ENCODE measurements at regions of chr1 and their contacts with region 1.

Region 1: DNA sequence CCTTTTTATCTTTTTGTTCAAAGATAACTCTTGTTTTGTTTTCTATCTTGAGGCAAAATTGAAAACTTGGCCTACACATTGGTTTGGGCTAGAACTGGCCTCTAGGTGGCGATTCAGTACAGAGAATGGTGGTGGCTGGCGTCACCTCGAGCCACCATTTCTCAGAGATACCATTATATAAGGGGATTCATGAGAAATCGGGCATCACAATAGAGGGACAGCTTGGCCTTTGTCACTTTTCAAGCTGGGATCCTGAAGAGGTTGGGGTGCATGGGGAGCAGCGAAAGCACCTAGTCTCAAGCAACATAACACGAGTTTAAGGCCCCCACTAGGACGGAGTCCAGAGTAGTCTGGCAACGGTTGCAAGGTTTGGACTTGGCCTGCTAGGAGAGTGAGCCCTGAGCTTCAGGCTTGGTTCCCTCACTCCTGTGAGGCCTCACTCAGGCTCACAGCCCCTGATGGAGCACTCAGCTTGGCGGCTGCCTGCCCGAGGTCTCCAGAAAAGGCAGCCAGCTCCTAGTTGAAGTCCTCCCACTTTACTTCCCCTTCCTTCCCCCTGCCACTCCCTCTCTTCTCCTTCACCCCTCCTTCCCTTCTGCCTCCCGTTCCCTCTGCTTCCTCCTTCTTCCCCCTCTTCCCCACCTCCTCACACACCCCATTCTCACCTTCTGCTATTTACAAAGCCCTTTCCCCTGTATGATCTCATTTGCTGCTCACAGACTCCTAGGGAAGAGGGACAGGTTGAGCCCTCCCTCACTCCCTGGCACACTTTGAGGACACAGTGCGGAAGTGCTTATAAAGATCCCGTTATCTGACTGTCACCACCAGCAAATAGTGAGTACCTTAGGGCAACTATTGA is 67.8 kb downstream of the LRIG2 start:
- DNase-seq: peak; percentile 53 to 60
- ATAC-seq: peak; percentile 91 to 95
- H3K4me3 ChIP-seq: no peak overlapping the region
- H3K27ac ChIP-seq: peak overlapping the region; percentile 63 to 82
- H3K4me1 ChIP-seq: peaks cover 19% of the 10 kb centered on the region
- CTCF ChIP-seq: peak; percentile 77
- EP300 ChIP-seq: no peak
- POLR2A ChIP-seq: no peak
- RAD21 ChIP-seq: peak; percentile 90 to 95

Region 2: DNA sequence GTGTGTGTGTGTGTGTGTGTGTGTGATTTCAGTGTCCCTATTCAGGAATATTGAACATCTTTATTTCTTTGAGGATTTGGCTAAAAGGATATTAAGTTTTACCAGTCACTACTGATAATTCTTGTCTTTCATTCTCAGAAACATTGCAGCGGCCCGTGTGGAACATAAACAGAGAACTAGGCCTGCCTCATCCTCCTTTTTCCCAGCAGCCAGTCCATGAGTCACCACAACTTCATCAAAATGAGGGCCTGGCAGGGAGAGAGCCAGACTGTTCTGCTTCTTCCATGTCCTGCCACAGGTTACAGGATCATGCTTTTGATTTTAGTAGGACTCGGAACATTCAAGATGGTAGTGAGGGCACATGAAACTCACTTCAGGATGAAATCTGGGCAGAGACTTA is 17.1 kb before region 1 on chr1:
- CTCF ChIA-PET with region 1: no interaction called
- POLR2A ChIA-PET with region 1: no interaction called
- DNase-seq: no peak
- ATAC-seq: no peak
- H3K4me3 ChIP-seq: no peak overlapping the region
- H3K27ac ChIP-seq: no peak overlapping the region
- H3K4me1 ChIP-seq: no peaks in the 10 kb centered on the region
- CTCF ChIP-seq: no peak
- EP300 ChIP-seq: no peak
- POLR2A ChIP-seq: no peak
- RAD21 ChIP-seq: no peak

Region 3: GRCh38 chr1:113389953-113390834 is 249.4 kb after region 1 on chr1 and contains the start of gene MAGI3:
- CTCF ChIA-PET with region 1: interaction called, 19 read pairs
- POLR2A ChIA-PET with region 1: interaction called, 3 read pairs
- DNase-seq: peak; percentile 73 to 96
- ATAC-seq: peak; percentile 88 to 91
- H3K4me3 ChIP-seq: peak within 1 kb of the TSS; percentile 98
- H3K27ac ChIP-seq: peak within 1 kb of the TSS; percentile 91 to 98
- H3K4me1 ChIP-seq: peaks cover 38% of the 10 kb centered on the region
- CTCF ChIP-seq: no peak
- EP300 ChIP-seq: no peak
- POLR2A ChIP-seq: peak; percentile 69
- RAD21 ChIP-seq: no peak
- polyA plus RNA-seq, gene MAGI3: 7.9 and 8.2 TPM in 2 replicates

Region 4: GRCh38 chr1:113677250-113678158 is 536.7 kb after region 1 on chr1:
- CTCF ChIA-PET with region 1: interaction called, 25 read pairs
- POLR2A ChIA-PET with region 1: interaction called, 3 read pairs
- DNase-seq: peak; percentile 20 to 49
- ATAC-seq: peak in 1 of 2 experiments; percentile 60; a peak in 2 of 6 replicates
- H3K4me3 ChIP-seq: no peak overlapping the region
- H3K27ac ChIP-seq: peak overlapping the region in 1 of 2 experiments; percentile 43; a peak in 2 of 6 replicates
- H3K4me1 ChIP-seq: peaks cover 31% of the 10 kb centered on the region
- CTCF ChIP-seq: peak; percentile 70
- EP300 ChIP-seq: no peak
- POLR2A ChIP-seq: no peak
- RAD21 ChIP-seq: peak; percentile 83 to 85

Measured in A549 (cell line).